HCT116 (cell line): ENCODE measurements at regions of chr1 and their contacts with region 1.

Region 1: DNA sequence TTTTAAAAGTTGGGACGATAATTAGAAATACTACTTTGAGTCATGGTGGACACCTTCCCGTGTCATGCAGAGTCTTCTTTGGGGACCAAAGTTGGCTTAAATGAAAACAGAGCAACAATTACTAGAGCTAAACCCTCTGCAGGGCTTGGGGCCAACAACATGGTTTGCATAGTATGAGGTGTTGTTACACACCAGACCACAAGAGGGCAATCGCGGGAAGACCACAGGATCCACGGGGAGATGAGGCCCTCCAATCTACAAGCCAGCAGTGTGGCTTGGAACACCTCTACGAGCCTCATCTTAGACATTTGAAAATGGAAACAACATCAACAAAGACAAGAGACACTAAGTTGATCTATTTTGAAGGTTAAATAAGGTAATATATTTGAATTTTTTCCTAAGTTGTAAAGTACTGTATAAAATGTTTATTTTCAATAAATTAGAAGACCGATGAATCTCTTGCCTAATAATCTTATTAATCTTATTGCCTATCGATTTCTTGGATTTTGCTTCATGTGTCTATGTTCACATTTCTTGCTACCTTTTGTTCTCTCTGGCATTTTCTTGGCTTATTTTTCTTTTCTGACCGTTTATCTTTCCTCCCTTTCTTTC is 8.2 kb upstream of the SMCP start:
- DNase-seq: peak; percentile 61
- ATAC-seq: peak; percentile 82
- H3K4me3 ChIP-seq: no peak overlapping the region
- H3K27ac ChIP-seq: no peak overlapping the region
- H3K4me1 ChIP-seq: no peaks in the 10 kb centered on the region
- H3K27me3 ChIP-seq: peaks cover 5% of the 10 kb centered on the region; the same call in 1 of the 2 replicates
- CTCF ChIP-seq: peak; percentile 73 to 81 (median 80)
- POLR2A ChIP-seq: no peak
- RAD21 ChIP-seq: peak; percentile 55

Region 2: GRCh38 chr1:152654110-152654509 is 215.8 kb before region 1 on chr1:
- CTCF ChIA-PET with region 1: interaction called, 8 read pairs
- POLR2A ChIA-PET with region 1: no interaction called
- RAD21 ChIA-PET with region 1: no interaction called
- intact Hi-C with region 1: loop called (anchors 1 kb)
- DNase-seq: peak; percentile 32
- ATAC-seq: peak; percentile 94
- H3K4me3 ChIP-seq: no peak overlapping the region
- H3K27ac ChIP-seq: no peak overlapping the region
- H3K4me1 ChIP-seq: no peaks in the 10 kb centered on the region
- H3K27me3 ChIP-seq: peaks cover 44% of the 10 kb centered on the region
- CTCF ChIP-seq: peak; percentile 59 to 88 (median 81)
- POLR2A ChIP-seq: no peak
- RAD21 ChIP-seq: peak; percentile 70

Region 3: GRCh38 chr1:152926091-152926490 is 56.2 kb after region 1 on chr1:
- CTCF ChIA-PET with region 1: interaction called, 46 read pairs
- POLR2A ChIA-PET with region 1: no interaction called
- RAD21 ChIA-PET with region 1: no interaction called
- intact Hi-C with region 1: loop called (anchors 1 kb)
- DNase-seq: peak; percentile 24
- ATAC-seq: peak; percentile 83
- H3K4me3 ChIP-seq: no peak overlapping the region
- H3K27ac ChIP-seq: no peak overlapping the region
- H3K4me1 ChIP-seq: no peaks in the 10 kb centered on the region
- H3K27me3 ChIP-seq: peaks cover 19% of the 10 kb centered on the region
- CTCF ChIP-seq: peak; percentile 53 to 64 (median 62); a peak in 4 of 6 replicates
- POLR2A ChIP-seq: no peak
- RAD21 ChIP-seq: peak; percentile 76

Region 4: DNA sequence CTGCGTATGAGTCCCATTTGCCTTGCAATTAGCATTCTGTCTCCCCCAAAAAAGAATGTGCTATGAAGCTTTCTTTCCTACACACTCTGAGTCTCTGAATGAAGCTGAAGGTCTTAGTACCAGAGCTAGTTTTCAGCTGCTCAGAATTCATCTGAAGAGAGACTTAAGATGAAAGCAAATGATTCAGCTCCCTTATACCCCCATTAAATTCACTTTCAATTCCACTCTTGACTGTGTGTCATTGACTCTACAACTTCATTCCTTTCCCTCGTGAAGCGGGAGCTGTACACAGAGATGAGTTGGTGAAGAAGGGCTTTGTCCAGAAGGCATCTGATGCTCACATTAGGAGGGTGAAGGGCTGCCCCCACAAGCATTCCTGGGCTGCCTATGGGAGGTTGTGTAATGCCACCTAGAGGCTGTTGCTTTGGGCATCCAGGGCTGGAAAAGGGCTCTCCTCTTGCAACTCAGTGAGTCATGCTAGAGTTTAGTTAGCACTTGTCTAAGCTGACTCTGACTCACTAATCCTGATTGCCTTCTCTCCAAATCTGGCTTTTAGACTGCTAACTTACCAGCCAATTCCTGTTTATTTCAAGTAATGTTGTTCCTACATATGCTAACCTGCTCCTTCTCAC is 162.9 kb after region 1 on chr1:
- CTCF ChIA-PET with region 1: no interaction called
- POLR2A ChIA-PET with region 1: no interaction called
- RAD21 ChIA-PET with region 1: no interaction called
- intact Hi-C with region 1: loop called (anchors 5 kb)
- DNase-seq: peak; percentile 36
- ATAC-seq: peak; percentile 98
- H3K4me3 ChIP-seq: no peak overlapping the region
- H3K27ac ChIP-seq: no peak overlapping the region
- H3K4me1 ChIP-seq: peaks cover 0 to 6% of the 10 kb centered on the region in 2 experiments; a peak in 1 of 4 replicates
- H3K27me3 ChIP-seq: peaks cover 7% of the 10 kb centered on the region
- CTCF ChIP-seq: peak; percentile 37 to 56 (median 53); a peak in 5 of 6 replicates
- POLR2A ChIP-seq: no peak
- RAD21 ChIP-seq: peak; percentile 65

Region 5: GRCh38 chr1:153192697-153193096 is 322.8 kb after region 1 on chr1:
- CTCF ChIA-PET with region 1: interaction called, 94 read pairs
- POLR2A ChIA-PET with region 1: no interaction called
- RAD21 ChIA-PET with region 1: interaction called in 1 of 2 experiments, 4 read pairs
- intact Hi-C with region 1: loop called (anchors 1 kb)
- DNase-seq: peak; percentile 28
- ATAC-seq: peak; percentile 88
- H3K4me3 ChIP-seq: no peak overlapping the region
- H3K27ac ChIP-seq: no peak overlapping the region
- H3K4me1 ChIP-seq: no peaks in the 10 kb centered on the region
- H3K27me3 ChIP-seq: peaks cover 56% of the 10 kb centered on the region
- CTCF ChIP-seq: peak; percentile 69 to 73 (median 72); a peak in 5 of 6 replicates
- POLR2A ChIP-seq: no peak
- RAD21 ChIP-seq: peak; percentile 80

Region 6: DNA sequence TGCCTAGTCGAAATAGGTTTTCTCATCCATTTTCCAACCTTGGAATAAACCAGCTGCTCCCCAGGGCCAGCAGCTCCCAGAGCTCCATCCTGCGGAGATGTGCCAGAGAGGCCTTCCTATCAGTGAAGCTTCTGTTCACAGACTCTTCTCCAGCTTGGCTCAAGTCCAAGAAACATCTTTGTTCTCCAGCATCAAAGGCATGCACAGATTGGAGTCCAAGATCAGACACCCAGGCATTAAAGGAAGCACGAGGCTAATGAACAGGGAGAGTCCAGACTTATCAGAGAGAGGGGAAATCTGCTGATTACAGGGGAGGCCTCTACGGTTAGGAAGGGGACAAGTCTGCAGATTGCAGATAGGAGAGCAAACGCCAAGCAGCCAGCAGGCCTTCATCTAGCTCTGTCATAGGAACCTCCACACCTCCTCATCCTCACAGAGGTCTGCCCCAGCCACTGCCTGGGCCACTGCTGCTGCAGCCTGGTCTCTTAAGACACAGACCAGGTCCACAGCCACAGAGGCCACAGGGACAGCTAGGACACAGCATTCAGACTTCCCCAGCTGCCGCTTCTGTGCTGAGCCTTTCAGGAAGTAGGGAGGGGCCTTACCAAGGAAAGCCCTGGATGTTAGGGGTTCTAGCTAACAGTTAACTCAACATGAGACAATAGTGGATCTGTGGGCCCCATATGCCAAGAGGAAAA is 350.8 kb after region 1 on chr1:
- CTCF ChIA-PET with region 1: interaction called, 4 read pairs
- POLR2A ChIA-PET with region 1: no interaction called
- RAD21 ChIA-PET with region 1: no interaction called
- intact Hi-C with region 1: loop called (anchors 2 kb)
- DNase-seq: no peak
- ATAC-seq: no peak
- H3K4me3 ChIP-seq: no peak overlapping the region
- H3K27ac ChIP-seq: no peak overlapping the region
- H3K4me1 ChIP-seq: no peaks in the 10 kb centered on the region
- H3K27me3 ChIP-seq: peaks cover 26% of the 10 kb centered on the region
- CTCF ChIP-seq: no peak
- POLR2A ChIP-seq: no peak
- RAD21 ChIP-seq: no peak

Region 7: GRCh38 chr1:153277817-153278216 is 407.9 kb after region 1 on chr1:
- CTCF ChIA-PET with region 1: interaction called, 3 read pairs
- POLR2A ChIA-PET with region 1: no interaction called
- RAD21 ChIA-PET with region 1: no interaction called
- intact Hi-C with region 1: loop called (anchors 2 kb)
- DNase-seq: peak; percentile 66
- ATAC-seq: peak; percentile 100
- H3K4me3 ChIP-seq: no peak overlapping the region
- H3K27ac ChIP-seq: no peak overlapping the region
- H3K4me1 ChIP-seq: no peaks in the 10 kb centered on the region
- H3K27me3 ChIP-seq: peaks cover 20% of the 10 kb centered on the region; the same call in 1 of the 2 replicates
- CTCF ChIP-seq: peak; percentile 58 to 93 (median 89); a peak in 5 of 6 replicates
- POLR2A ChIP-seq: no peak
- RAD21 ChIP-seq: peak; percentile 71